CD4-positive, alpha-beta memory T cell (primary cell): ENCODE measurements at regions of chr12 and their contacts with region 1.

Region 1: GRCh38 chr12:11812586-11813427 is 163.3 kb downstream of the ETV6 start:
- DNase-seq: peak in 1 of 5 donors; percentile 30
- H3K4me3 ChIP-seq: no peak overlapping the region
- H3K4me3 Mint-ChIP-seq: peak overlapping the region; percentile 46 to 87 (median 64)
- H3K27ac ChIP-seq: no peak overlapping the region
- H3K27ac Mint-ChIP-seq: peak overlapping the region; percentile 49 to 96 (median 88)
- H3K4me1 ChIP-seq: peaks cover 49% of the 10 kb centered on the region
- H3K4me1 Mint-ChIP-seq: peaks cover 38 to 82% (median 64%) of the 10 kb centered on the region in 4 donors
- H3K27me3 ChIP-seq: no peaks in the 10 kb centered on the region
- H3K27me3 Mint-ChIP-seq: no peaks in the 10 kb centered on the region

Region 2: GRCh38 chr12:11162502-11162901 is 650.3 kb before region 1 on chr12:
- CTCF ChIA-PET with region 1: no interaction called
- POLR2A ChIA-PET with region 1: no interaction called
- intact Hi-C with region 1: no loop called
- DNase-seq: no peak
- H3K4me3 ChIP-seq: no peak overlapping the region
- H3K4me3 Mint-ChIP-seq: peak overlapping the region in 1 of 8 donors; percentile 11
- H3K27ac ChIP-seq: no peak overlapping the region
- H3K27ac Mint-ChIP-seq: no peak overlapping the region
- H3K4me1 ChIP-seq: peaks cover 12% of the 10 kb centered on the region
- H3K4me1 Mint-ChIP-seq: peaks cover 45 to 66% (median 53%) of the 10 kb centered on the region in 4 donors
- H3K27me3 ChIP-seq: no peaks in the 10 kb centered on the region
- H3K27me3 Mint-ChIP-seq: no peaks in the 10 kb centered on the region

Region 3: DNA sequence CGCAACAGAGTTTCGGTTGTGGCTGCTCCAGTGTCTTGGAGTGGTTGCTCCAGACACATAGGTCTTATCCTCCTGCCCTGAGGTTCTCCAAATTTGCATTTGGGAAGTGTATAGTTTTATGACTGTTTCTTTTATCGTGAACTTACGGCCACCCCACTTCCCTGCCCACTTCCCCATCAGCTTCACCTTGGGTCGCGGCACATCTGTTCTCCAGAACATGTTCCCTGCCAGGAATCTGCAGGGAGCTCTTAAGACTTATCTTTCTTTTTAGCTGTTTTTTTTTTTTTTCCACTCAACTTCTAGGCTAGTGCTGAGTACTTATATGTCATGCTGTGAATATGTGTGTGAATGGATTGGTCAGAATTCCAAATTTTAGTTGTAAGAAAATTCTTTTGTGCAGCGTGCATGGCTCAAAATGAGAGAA is 87.9 kb before region 1 on chr12:
- CTCF ChIA-PET with region 1: no interaction called
- POLR2A ChIA-PET with region 1: no interaction called
- intact Hi-C with region 1: loop called (anchors 5 kb)
- DNase-seq: no peak
- H3K4me3 ChIP-seq: no peak overlapping the region
- H3K4me3 Mint-ChIP-seq: peak overlapping the region in 1 of 8 donors; percentile 17
- H3K27ac ChIP-seq: no peak overlapping the region
- H3K27ac Mint-ChIP-seq: peak overlapping the region in 4 of 7 donors; percentile 6 to 55 (median 40)
- H3K4me1 ChIP-seq: peaks cover 61% of the 10 kb centered on the region
- H3K4me1 Mint-ChIP-seq: peaks cover 43 to 85% (median 69%) of the 10 kb centered on the region in 4 donors
- H3K27me3 ChIP-seq: no peaks in the 10 kb centered on the region
- H3K27me3 Mint-ChIP-seq: no peaks in the 10 kb centered on the region

Region 4: GRCh38 chr12:11765817-11766794 is 46.7 kb before region 1 on chr12:
- CTCF ChIA-PET with region 1: no interaction called
- POLR2A ChIA-PET with region 1: no interaction called
- intact Hi-C with region 1: loop called (anchors 5 kb)
- DNase-seq: peak; percentile 14 to 51 (median 25)
- H3K4me3 ChIP-seq: no peak overlapping the region
- H3K4me3 Mint-ChIP-seq: peak overlapping the region; percentile 49 to 87 (median 80)
- H3K27ac ChIP-seq: peak overlapping the region; percentile 27
- H3K27ac Mint-ChIP-seq: peak overlapping the region; percentile 78 to 91 (median 86)
- H3K4me1 ChIP-seq: peaks cover 95% of the 10 kb centered on the region
- H3K4me1 Mint-ChIP-seq: peaks cover 69 to 99% (median 86%) of the 10 kb centered on the region in 4 donors
- H3K27me3 ChIP-seq: no peaks in the 10 kb centered on the region
- H3K27me3 Mint-ChIP-seq: no peaks in the 10 kb centered on the region

Region 5: GRCh38 chr12:11780521-11781101 is 32.2 kb before region 1 on chr12:
- CTCF ChIA-PET with region 1: no interaction called
- POLR2A ChIA-PET with region 1: no interaction called
- intact Hi-C with region 1: no loop called
- DNase-seq: peak in 1 of 5 donors; percentile 30
- H3K4me3 ChIP-seq: no peak overlapping the region
- H3K4me3 Mint-ChIP-seq: peak overlapping the region in 2 of 8 donors; percentile 15 to 35
- H3K27ac ChIP-seq: no peak overlapping the region
- H3K27ac Mint-ChIP-seq: peak overlapping the region in 4 of 7 donors; percentile 21 to 65 (median 46)
- H3K4me1 ChIP-seq: peaks cover 48% of the 10 kb centered on the region
- H3K4me1 Mint-ChIP-seq: peaks cover 39 to 68% (median 55%) of the 10 kb centered on the region in 4 donors
- H3K27me3 ChIP-seq: no peaks in the 10 kb centered on the region
- H3K27me3 Mint-ChIP-seq: no peaks in the 10 kb centered on the region

Region 6: DNA sequence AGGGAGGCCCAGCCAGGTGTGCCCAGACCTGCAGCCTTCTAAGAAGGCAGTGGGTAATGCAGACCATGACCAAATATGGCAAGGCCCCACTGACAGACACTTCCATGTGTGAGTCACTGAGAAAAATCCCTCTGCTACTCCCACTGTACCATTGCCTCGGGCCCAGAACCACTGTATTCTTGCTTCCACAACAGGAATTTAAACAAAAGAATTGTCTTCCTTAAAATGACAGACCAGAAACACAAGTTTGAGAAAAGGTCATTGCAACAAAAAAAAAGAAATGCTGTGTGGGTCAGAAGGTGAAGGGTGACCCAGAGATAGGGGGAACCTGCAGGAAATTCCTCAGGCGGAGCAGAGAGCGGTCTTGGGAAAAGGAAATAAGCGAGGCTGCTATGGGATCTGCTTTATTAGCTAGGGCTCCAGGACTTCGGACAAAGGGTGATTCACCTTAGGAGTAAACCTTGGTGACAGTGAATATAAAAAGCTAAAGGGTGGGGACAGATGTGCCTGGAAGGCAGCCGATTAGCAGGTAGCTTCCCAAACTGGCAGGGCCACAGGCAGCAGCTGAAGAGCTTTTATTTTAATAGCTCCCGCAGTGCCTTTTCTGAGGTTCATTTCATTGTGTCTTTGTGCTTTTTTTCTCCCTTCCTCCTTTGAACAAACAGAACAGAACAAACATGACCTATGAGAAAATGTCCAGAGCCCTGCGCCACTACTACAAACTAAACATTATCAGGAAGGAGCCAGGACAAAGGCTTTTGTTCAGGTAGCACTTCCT is 72.6 kb after region 1 on chr12:
- CTCF ChIA-PET with region 1: no interaction called
- POLR2A ChIA-PET with region 1: no interaction called
- intact Hi-C with region 1: no loop called
- DNase-seq: no peak
- H3K4me3 ChIP-seq: no peak overlapping the region
- H3K4me3 Mint-ChIP-seq: no peak overlapping the region
- H3K27ac ChIP-seq: no peak overlapping the region
- H3K27ac Mint-ChIP-seq: peak overlapping the region in 2 of 7 donors; percentile 67 to 68
- H3K4me1 ChIP-seq: no peaks in the 10 kb centered on the region
- H3K4me1 Mint-ChIP-seq: peaks cover 6 to 16% (median 13%) of the 10 kb centered on the region in 4 donors
- H3K27me3 ChIP-seq: no peaks in the 10 kb centered on the region
- H3K27me3 Mint-ChIP-seq: no peaks in the 10 kb centered on the region

Region 7: GRCh38 chr12:13504074-13504473 is 1691.3 kb after region 1 on chr12:
- CTCF ChIA-PET with region 1: no interaction called
- POLR2A ChIA-PET with region 1: no interaction called
- intact Hi-C with region 1: no loop called
- DNase-seq: no peak
- H3K4me3 ChIP-seq: no peak overlapping the region
- H3K4me3 Mint-ChIP-seq: no peak overlapping the region
- H3K27ac ChIP-seq: no peak overlapping the region
- H3K27ac Mint-ChIP-seq: no peak overlapping the region
- H3K4me1 ChIP-seq: no peaks in the 10 kb centered on the region
- H3K4me1 Mint-ChIP-seq: no peaks in the 10 kb centered on the region
- H3K27me3 ChIP-seq: no peaks in the 10 kb centered on the region
- H3K27me3 Mint-ChIP-seq: peaks cover 0 to 3% of the 10 kb centered on the region in 2 donors